Mammary epithelial cell (primary cell): ENCODE measurements at regions of chr6 and their contacts with region 1.

Region 1: GRCh38 chr6:12324514-12325147 is 34.5 kb downstream of the EDN1 start:
- DNase-seq: no peak
- H3K4me3 ChIP-seq: no peak overlapping the region
- H3K27ac ChIP-seq: peak overlapping the region; percentile 99
- H3K4me1 ChIP-seq: peaks cover 50% of the 10 kb centered on the region
- H3K27me3 ChIP-seq: no peaks in the 10 kb centered on the region
- CTCF ChIP-seq: no peak

Region 2: DNA sequence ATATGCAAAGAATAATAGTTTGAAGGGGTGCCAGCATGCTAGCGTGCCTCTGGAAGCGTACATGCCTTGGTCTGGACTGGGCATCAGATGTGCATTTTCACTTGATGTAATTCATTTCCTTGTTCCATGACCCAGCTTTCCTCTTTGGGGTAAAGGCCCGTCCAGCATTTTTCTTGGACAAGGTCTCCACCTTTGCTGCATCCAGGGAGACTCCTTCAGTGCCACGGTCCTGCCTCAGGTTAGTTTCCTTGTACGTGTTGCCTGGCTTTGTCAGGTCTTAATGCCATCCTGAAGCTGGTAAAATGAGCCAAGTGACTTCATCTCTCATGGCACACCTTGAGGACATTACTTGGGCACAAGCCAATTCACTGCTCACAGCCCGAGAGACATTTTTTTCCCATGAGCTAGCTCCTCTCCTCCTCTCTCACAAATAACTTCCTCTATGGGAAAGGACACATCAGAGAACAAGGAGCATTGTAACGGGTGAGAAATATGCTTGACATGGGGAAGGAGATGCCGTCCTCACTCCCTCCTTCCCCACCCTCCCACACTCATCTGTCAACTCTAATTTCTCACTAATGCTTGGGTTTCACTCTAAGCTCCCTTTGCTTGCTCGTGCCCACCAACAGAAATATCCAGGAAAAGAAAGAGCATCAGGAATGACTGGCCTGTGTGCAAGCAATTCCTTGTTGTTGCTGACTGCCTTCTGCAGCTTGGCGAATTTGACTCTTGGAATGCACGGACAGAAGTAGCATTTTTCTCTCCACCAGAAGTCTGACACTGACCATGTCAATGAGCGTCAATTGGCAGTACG is 10.4 kb before region 1 on chr6:
- CTCF ChIA-PET with region 1: no interaction called
- dilution Hi-C with region 1: no loop called
- in situ Hi-C with region 1: no loop called
- intact Hi-C with region 1: loop called (anchors 1 kb)
- DNase-seq: peak; percentile 90
- H3K4me3 ChIP-seq: no peak overlapping the region
- H3K27ac ChIP-seq: peak overlapping the region; percentile 83
- H3K4me1 ChIP-seq: peaks cover 23% of the 10 kb centered on the region
- H3K27me3 ChIP-seq: no peaks in the 10 kb centered on the region
- CTCF ChIP-seq: no peak

Region 3: DNA sequence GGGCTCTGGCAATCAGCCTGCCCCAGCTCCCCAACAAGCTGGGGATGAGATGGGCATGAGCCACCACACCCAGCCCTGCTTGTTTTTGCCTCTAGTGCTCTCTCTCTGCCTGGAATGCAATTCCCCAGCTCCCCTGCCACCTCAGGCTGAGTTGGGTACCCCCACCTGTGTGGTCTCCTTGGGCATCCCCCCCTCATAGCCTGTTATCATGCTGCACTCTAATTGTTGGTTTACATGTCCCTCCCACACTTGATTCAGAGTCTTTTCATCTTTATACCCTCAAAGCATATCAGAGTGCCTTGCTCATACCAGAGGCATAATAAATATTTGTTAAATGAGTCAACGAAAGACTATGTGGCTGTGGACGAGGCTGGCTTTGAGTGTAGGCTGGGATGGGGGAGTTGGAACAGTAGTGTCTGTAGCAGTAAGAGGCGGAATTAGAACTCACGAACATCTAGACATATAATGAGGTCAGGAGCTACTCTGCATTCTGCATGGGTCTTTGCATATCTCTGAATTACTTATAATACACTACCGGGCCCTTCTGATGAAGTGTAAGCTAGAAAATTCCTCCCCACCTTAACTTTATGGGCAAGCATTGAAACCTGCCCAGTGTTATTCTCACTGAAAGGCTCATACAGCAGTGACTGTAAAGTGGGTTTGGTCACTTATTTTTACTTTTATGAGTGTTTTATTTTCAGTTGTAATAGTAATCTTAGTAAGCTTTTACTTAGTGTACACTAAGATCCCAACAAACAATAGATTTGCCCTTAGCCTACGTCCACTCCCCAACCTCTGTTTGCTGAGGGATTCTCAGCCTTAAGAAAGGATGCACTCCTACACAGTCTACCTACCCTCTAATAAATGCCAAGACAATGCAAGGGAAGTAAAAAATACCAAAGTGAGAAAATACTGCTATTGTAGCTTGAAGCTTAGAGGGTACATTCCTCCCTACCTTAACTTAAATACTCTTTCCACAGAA is 24.2 kb after region 1 on chr6:
- CTCF ChIA-PET with region 1: interaction called, 12 read pairs
- dilution Hi-C with region 1: no loop called
- in situ Hi-C with region 1: no loop called
- intact Hi-C with region 1: no loop called
- DNase-seq: peak; percentile 83
- H3K4me3 ChIP-seq: no peak overlapping the region
- H3K27ac ChIP-seq: peak overlapping the region; percentile 52
- H3K4me1 ChIP-seq: peaks cover 16% of the 10 kb centered on the region
- H3K27me3 ChIP-seq: no peaks in the 10 kb centered on the region
- CTCF ChIP-seq: no peak

Region 4: DNA sequence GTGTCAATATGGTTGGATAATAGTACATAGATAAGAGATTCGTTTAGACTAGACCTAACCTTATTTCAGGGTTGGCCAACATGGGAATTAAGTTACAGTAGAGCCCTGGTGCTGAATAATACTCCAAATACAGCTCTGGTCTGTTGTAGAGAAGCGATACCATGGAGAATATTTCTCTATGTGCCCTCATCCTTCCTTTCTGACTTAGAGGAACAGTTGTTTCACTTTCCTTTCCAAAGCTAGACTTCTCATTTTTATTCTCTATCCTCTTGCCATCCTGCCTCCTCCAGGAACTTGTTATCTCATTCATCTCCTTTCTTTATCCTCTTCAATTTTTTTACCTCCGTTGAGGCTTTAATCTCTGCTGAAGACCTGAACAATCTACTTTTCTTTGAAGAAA is 34.4 kb after region 1 on chr6:
- CTCF ChIA-PET with region 1: no interaction called
- dilution Hi-C with region 1: no loop called
- in situ Hi-C with region 1: no loop called
- intact Hi-C with region 1: loop called (anchors 1 kb)
- DNase-seq: no peak
- H3K4me3 ChIP-seq: no peak overlapping the region
- H3K27ac ChIP-seq: no peak overlapping the region
- H3K4me1 ChIP-seq: peaks cover 23% of the 10 kb centered on the region
- H3K27me3 ChIP-seq: no peaks in the 10 kb centered on the region
- CTCF ChIP-seq: no peak

Region 5: GRCh38 chr6:12420626-12421025 is 96.0 kb after region 1 on chr6:
- CTCF ChIA-PET with region 1: no interaction called
- dilution Hi-C with region 1: no loop called
- in situ Hi-C with region 1: no loop called
- intact Hi-C with region 1: no loop called
- DNase-seq: peak; percentile 90
- H3K4me3 ChIP-seq: no peak overlapping the region
- H3K27ac ChIP-seq: peak overlapping the region; percentile 41
- H3K4me1 ChIP-seq: peaks cover 10% of the 10 kb centered on the region
- H3K27me3 ChIP-seq: no peaks in the 10 kb centered on the region
- CTCF ChIP-seq: no peak